B cell (primary cell): ENCODE measurements at regions of chr21 and their contacts with region 1.

Region 1: DNA sequence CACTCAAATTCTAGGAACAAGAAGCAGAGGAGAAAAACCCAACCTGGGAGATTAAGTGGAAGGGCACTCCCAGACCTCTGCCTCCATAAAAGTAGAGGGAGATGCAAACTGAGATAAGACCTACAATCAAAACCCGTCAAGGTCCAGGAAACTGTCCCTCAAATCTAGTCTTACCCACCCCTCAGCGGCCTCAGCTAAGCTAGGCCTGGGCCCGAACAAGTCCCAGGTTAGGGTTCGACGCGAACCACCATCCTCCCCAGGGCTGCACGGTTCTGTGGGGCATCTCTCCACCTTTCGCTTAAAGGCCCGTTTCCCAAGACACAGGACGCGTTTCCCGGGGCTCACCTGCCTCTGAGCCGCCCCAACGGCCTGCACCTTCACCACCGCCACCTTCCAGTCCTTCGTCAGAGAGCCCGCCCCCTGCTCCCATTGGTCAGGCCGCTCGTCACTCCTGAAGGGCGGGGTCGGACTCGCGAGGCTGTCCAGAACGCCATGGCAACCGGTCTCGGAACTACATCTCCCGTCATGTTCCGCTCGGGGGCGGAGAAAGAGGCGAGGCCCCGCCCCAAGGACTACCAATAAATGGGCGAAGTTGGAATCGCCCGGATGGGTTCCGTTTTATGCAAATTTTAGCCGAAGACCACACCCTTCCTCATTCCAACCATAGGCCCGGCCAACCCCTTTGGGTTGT is at the start of gene CRYZL1:
- DNase-seq: peak; percentile 100
- ATAC-seq: peak; percentile 77
- H3K4me3 ChIP-seq: peak within 1 kb of the TSS; percentile 71 to 91 (median 79)
- H3K4me3 Mint-ChIP-seq: peak within 1 kb of the TSS; percentile 94
- H3K27ac ChIP-seq: peak within 1 kb of the TSS; percentile 84 to 90
- H3K27ac Mint-ChIP-seq: peak within 1 kb of the TSS; percentile 97
- H3K4me1 ChIP-seq: peaks cover 16 to 20% of the 10 kb centered on the region in 2 donors
- H3K4me1 Mint-ChIP-seq: peaks cover 27% of the 10 kb centered on the region
- H3K27me3 ChIP-seq: peaks cover 0 to 27% (median 19%) of the 10 kb centered on the region in 4 experiments
- H3K27me3 Mint-ChIP-seq: peaks cover 22% of the 10 kb centered on the region
- CTCF ChIP-seq: no peak
- total RNA-seq, gene CRYZL1: 60.6 and 66.9 TPM in 2 replicates

Region 2: GRCh38 chr21:32278518-32279376 is 1362.7 kb before region 1 on chr21 and contains the start of gene MIS18A:
- CTCF ChIA-PET with region 1: no interaction called
- POLR2A ChIA-PET with region 1: no interaction called
- intact Hi-C with region 1: loop called (anchors 5 kb)
- DNase-seq: peak; percentile 97
- ATAC-seq: peak; percentile 97
- H3K4me3 ChIP-seq: peak within 1 kb of the TSS; percentile 70 to 86 (median 82)
- H3K4me3 Mint-ChIP-seq: peak within 1 kb of the TSS; percentile 100
- H3K27ac ChIP-seq: peak within 1 kb of the TSS; percentile 29 to 44
- H3K27ac Mint-ChIP-seq: peak within 1 kb of the TSS; percentile 91
- H3K4me1 ChIP-seq: peaks cover 16 to 22% of the 10 kb centered on the region in 2 donors
- H3K4me1 Mint-ChIP-seq: peaks cover 22% of the 10 kb centered on the region
- H3K27me3 ChIP-seq: no peaks in the 10 kb centered on the region
- H3K27me3 Mint-ChIP-seq: no peaks in the 10 kb centered on the region
- CTCF ChIP-seq: no peak
- total RNA-seq, gene MIS18A: 8.8 and 10.4 TPM in 2 replicates

Region 3: GRCh38 chr21:32712043-32712442 is 929.4 kb before region 1 on chr21:
- CTCF ChIA-PET with region 1: no interaction called
- POLR2A ChIA-PET with region 1: no interaction called
- intact Hi-C with region 1: loop called (anchors 1 kb)
- DNase-seq: peak; percentile 88
- ATAC-seq: peak; percentile 96
- H3K4me3 ChIP-seq: peak overlapping the region in 1 of 5 experiments; percentile 0
- H3K4me3 Mint-ChIP-seq: peak overlapping the region; percentile 67
- H3K27ac ChIP-seq: no peak overlapping the region
- H3K27ac Mint-ChIP-seq: peak overlapping the region; percentile 61
- H3K4me1 ChIP-seq: peaks cover 22 to 30% of the 10 kb centered on the region in 2 donors
- H3K4me1 Mint-ChIP-seq: peaks cover 20% of the 10 kb centered on the region
- H3K27me3 ChIP-seq: peaks cover 2 to 60% (median 59%) of the 10 kb centered on the region in 4 experiments
- H3K27me3 Mint-ChIP-seq: peaks cover 52% of the 10 kb centered on the region
- CTCF ChIP-seq: no peak